ENCODE measurements at regions of chr9 and their contacts with region 1.

Region 1: GRCh38 chr9:136631038-136632000 is 31.4 kb upstream of the EGFL7 start:
- DNase-seq: peak; percentile 82
- ATAC-seq: peak; percentile 88
- H3K4me3 Mint-ChIP-seq: no peak overlapping the region
- H3K27ac Mint-ChIP-seq: no peak overlapping the region
- H3K4me1 Mint-ChIP-seq: no peaks in the 10 kb centered on the region
- H3K27me3 Mint-ChIP-seq: peaks cover 17% of the 10 kb centered on the region

Region 2: GRCh38 chr9:136451221-136451877 is 180.0 kb before region 1 on chr9:
- CTCF ChIA-PET with region 1: no interaction called
- DNase-seq: no peak
- ATAC-seq: no peak
- H3K4me3 Mint-ChIP-seq: no peak overlapping the region
- H3K27ac Mint-ChIP-seq: no peak overlapping the region
- H3K4me1 Mint-ChIP-seq: no peaks in the 10 kb centered on the region
- H3K27me3 Mint-ChIP-seq: no peaks in the 10 kb centered on the region

Region 3: GRCh38 chr9:136488247-136489214 is 142.8 kb before region 1 on chr9:
- CTCF ChIA-PET with region 1: interaction called, 125 read pairs
- DNase-seq: peak; percentile 78
- ATAC-seq: peak; percentile 37
- H3K4me3 Mint-ChIP-seq: no peak overlapping the region
- H3K27ac Mint-ChIP-seq: no peak overlapping the region
- H3K4me1 Mint-ChIP-seq: peaks cover 6% of the 10 kb centered on the region
- H3K27me3 Mint-ChIP-seq: no peaks in the 10 kb centered on the region